ENCODE measurements at regions of chr10 and their contacts with region 1.

Region 1: DNA sequence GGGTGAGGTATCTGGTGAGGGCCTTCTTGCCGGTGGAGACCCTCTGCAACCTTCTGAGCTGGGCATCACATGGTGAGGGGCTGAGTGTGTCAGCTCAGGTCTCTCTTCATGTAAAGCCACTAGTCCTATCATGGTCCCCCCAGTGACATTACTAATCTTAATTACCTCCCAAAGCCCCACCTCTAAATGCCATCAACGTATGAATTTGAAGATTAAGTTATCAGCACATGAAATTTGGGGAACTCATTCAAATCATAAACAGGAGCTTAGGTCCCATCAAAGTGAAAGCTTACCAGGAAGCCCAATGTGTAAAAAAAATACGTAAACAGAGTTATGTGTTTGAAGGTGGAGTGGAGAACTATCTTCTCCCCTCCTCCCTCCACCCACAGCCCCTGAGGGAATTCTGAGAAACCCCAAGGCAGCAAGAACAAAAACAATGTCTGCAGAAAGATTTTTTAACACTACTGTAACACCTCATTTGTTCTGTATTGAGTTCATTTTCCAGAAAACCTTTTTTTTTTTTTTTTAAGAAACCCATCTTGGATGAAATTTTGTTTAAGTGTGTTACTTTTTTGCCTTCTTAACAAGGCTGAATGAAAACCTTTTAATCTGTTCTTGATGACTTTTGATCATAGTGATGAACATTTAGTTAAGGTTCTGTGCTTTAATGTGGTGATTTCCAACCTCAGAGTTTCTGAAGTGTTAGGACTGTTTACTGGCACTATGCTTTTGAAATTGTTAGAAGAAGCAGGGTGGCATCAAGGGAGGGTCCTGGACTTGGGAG is 19.1 kb upstream of the PCGF5 start:
- DNase-seq: peak; percentile 39
- ATAC-seq: peak; percentile 61
- H3K4me3 Mint-ChIP-seq: peak overlapping the region; percentile 76
- H3K27ac Mint-ChIP-seq: peak overlapping the region; percentile 92
- H3K4me1 Mint-ChIP-seq: peaks cover 58% of the 10 kb centered on the region
- H3K27me3 Mint-ChIP-seq: no peaks in the 10 kb centered on the region

Region 2: DNA sequence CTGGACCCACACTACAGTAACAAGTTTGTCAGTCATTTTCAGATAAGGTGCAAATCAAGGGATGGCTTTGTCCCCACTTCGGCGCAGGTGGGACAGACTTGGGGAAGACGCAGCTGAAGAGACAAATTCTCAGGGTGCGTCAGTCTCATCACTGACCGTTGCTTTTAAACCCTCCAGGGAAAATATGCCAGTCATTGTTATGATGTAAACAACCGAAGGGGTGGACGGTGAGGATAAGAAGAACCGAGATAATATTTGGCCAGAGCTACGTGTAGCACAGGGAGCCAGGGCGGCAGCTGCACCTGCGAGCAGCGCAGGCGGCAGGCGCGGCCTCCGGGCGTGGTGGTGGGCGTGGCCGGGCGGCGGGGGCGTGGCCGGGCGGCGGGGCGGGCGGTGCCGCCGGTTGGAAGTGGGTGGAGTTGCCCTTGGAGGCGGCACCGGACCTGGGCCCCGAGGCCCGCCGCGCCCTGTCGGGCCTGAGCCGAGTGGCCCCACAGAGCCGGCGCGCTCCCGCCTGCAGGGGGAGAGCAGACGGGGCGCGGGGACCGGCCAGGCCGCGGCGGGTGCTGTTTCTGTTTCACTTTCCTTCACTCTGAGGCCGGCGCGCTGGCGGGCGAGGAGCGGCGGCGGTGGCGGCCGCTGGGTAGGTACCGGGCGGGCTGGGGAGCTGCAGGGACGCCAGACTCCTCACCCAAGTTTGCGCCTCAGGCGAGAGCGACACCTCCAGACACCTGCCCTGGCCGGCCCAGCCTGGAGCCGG is 19.0 kb after region 1 on chr10 and contains the start of gene PCGF5:
- POLR2A ChIA-PET with region 1: interaction called, 11 read pairs
- DNase-seq: peak; percentile 98
- ATAC-seq: peak; percentile 100
- H3K4me3 Mint-ChIP-seq: peak within 1 kb of the TSS; percentile 95
- H3K27ac Mint-ChIP-seq: peak within 1 kb of the TSS; percentile 90
- H3K4me1 Mint-ChIP-seq: peaks cover 35% of the 10 kb centered on the region
- H3K27me3 Mint-ChIP-seq: no peaks in the 10 kb centered on the region
- total RNA-seq, gene PCGF5: 51.6 to 52.5 TPM

Measured in activated naive CD8-positive, alpha-beta T cell treated with anti-CD3 and anti-CD28 coated beads, Interleukin-2, amount 10 ng/mL, durations not matched to agents 7 days and 5 days (primary cell).